Heart right ventricle (tissue), 16 donors: ENCODE measurements at regions of chr11 and their contacts with region 1.

Region 1: DNA sequence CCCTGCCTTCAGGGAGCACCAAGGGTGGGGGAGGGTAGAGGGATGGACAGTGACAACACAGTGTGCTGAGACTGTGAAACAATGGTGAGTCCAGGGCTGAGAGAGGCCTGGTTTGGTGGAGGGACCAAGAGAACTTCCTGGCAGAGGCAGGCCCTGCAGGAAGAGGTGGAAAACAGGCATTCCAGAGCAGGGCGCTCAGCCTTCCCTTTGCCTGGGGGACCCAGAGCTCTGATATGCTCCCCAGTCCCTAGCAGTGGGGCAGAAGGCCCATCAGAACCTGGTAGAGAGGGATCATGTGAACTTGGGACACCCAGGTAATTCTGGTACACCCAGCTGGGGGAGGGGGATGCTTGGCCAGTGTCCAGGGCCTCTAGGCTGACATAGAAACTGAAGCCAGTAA is 17.2 kb upstream of the UVRAG start:
- DNase-seq: no peak
- ATAC-seq: no peak
- H3K4me3 ChIP-seq: no peak overlapping the region
- H3K27ac ChIP-seq: no peak overlapping the region
- H3K4me1 ChIP-seq: peaks cover 0 to 31% (median 13%) of the 10 kb centered on the region in 9 donors
- H3K27me3 ChIP-seq: no peaks in the 10 kb centered on the region
- CTCF ChIP-seq: no peak

Region 2: DNA sequence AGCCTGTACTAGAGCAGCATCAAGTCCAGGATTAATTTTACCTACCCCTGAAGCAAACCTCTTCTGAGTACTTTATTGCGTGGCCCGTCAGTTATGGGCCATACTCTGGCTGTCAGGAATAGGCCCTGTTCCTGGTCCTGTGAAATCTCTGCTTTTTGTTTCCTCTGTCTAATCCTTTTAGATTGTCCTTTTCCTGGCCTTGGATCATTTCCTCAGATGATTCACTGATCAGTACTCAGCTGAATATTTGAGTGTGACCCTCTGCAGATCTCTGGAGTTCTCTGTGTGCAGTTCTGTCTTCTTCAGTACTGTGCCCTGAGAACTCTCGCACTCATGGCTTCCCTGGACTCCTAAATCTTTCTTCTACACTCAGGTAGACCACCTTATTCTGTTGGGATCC is 140.8 kb after region 1 on chr11:
- intact Hi-C with region 1: no loop called
- DNase-seq: no peak
- ATAC-seq: peak in 3 of 8 donors; percentile 25 to 59 (median 59)
- H3K4me3 ChIP-seq: no peak overlapping the region
- H3K27ac ChIP-seq: peak overlapping the region in 2 of 10 donors; percentile 4 to 10
- H3K4me1 ChIP-seq: peaks cover 0 to 43% (median 23%) of the 10 kb centered on the region in 9 donors
- H3K27me3 ChIP-seq: no peaks in the 10 kb centered on the region
- CTCF ChIP-seq: no peak

Region 3: DNA sequence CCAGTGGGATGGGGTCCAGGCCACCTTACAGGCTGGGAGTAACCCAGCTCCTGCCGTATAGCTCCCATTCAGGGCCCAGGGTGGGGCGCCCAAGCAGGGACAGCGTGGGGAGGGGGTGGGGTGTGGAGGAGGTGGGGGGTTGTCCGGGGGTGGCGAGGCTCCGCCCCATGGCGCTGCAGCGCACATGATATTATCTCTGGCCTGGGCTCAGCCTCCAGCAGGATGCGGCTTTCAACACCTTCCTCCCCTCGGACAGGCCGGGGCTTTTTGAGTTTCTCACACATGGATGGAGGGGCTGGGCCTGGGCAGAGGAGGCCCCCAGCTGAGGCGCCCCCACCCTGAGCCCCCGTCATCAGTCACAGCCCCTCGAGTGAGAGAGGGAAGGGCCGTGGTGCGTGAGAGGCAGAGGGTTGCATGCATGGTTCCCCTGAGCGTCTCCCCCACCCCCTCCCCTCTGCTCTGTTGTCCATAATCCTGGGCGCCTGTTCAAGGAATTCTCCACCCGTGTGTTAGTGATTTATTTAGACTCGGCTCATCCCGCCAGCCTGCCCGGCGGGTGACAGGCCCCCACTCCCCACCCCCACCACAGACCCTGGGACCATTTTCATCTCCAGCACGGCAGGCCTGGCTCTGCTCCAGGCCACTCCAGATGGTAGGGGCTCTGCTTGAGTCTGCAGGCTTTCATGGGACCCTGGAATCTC is 363.6 kb after region 1 on chr11:
- intact Hi-C with region 1: loop called in 3 of 10 experiments (anchors 10 kb)
- DNase-seq: peak; percentile 38 to 39
- ATAC-seq: peak; percentile 41 to 82 (median 76)
- H3K4me3 ChIP-seq: peak overlapping the region in 6 of 10 donors; percentile 26 to 38 (median 34)
- H3K27ac ChIP-seq: no peak overlapping the region
- H3K4me1 ChIP-seq: peaks cover 0 to 19% (median 17%) of the 10 kb centered on the region in 9 donors
- H3K27me3 ChIP-seq: no peaks in the 10 kb centered on the region
- CTCF ChIP-seq: no peak

Region 4: DNA sequence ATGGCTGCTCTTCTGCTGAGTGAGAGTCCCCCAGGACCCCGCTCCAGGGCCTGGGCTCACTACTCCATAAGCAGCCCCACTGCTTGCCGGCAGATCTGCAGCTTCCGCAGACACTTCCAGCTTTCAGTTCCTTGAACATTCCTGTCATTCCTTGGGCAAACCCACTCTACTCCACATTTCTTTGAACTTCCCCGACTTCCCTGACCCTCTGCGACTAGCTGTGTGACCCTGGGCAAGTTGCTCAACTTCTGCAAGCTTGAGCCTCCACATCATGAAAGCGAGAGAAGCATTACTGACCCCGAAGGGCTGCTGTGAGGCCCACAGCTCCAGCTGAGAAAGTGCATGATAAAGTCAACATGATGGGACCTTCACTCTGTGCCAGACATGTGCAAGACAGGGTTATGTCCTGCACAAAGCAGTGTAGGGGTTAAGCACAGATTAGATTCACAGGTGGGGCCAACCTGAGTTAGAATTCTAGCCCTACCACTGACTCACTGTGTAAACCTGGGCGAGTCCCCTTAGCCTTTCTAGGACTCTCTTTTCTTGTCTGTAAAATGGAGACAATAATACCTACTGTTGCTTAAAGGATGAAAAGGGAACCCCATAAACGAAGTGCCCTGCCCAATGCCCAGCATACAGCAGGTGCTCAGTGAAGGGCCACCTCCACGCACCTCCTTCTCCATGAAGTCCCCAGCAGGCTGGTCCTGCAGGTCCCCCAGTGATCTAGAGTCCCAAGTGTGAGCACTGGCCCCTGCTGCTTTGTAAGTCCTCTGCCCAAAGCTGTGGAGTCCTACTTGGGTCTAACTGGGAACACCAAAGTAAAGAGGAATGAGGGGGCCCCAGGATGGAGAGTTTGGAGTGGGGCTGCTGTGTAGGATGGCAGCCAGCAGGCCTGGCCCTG is 531.5 kb after region 1 on chr11:
- intact Hi-C with region 1: loop called in 2 of 10 experiments (anchors 5 to 10 kb)
- DNase-seq: no peak
- ATAC-seq: no peak
- H3K4me3 ChIP-seq: no peak overlapping the region
- H3K27ac ChIP-seq: no peak overlapping the region
- H3K4me1 ChIP-seq: peaks cover 0 to 11% (median 7%) of the 10 kb centered on the region in 9 donors
- H3K27me3 ChIP-seq: no peaks in the 10 kb centered on the region
- CTCF ChIP-seq: no peak